ENCODE measurements at regions of chr6 and their contacts with region 1.

Region 1: GRCh38 chr6:7910654-7911344 is at the start of gene TXNDC5:
- DNase-seq: peak; percentile 32 to 82 (median 66)
- ATAC-seq: peak; percentile 85
- H3K4me3 ChIP-seq: peak within 1 kb of the TSS; percentile 77
- H3K4me3 Mint-ChIP-seq: peak within 1 kb of the TSS; percentile 84
- H3K27ac ChIP-seq: no peak within 1 kb of the TSS
- H3K27ac Mint-ChIP-seq: no peak within 1 kb of the TSS
- H3K4me1 ChIP-seq: peaks cover 16% of the 10 kb centered on the region
- H3K4me1 Mint-ChIP-seq: no peaks in the 10 kb centered on the region
- H3K27me3 ChIP-seq: peaks cover 0 to 2% of the 10 kb centered on the region in 2 experiments
- H3K27me3 Mint-ChIP-seq: no peaks in the 10 kb centered on the region
- CTCF ChIP-seq: no peak
- total RNA-seq, gene TXNDC5: 4.2 to 7.8 TPM

Region 2: DNA sequence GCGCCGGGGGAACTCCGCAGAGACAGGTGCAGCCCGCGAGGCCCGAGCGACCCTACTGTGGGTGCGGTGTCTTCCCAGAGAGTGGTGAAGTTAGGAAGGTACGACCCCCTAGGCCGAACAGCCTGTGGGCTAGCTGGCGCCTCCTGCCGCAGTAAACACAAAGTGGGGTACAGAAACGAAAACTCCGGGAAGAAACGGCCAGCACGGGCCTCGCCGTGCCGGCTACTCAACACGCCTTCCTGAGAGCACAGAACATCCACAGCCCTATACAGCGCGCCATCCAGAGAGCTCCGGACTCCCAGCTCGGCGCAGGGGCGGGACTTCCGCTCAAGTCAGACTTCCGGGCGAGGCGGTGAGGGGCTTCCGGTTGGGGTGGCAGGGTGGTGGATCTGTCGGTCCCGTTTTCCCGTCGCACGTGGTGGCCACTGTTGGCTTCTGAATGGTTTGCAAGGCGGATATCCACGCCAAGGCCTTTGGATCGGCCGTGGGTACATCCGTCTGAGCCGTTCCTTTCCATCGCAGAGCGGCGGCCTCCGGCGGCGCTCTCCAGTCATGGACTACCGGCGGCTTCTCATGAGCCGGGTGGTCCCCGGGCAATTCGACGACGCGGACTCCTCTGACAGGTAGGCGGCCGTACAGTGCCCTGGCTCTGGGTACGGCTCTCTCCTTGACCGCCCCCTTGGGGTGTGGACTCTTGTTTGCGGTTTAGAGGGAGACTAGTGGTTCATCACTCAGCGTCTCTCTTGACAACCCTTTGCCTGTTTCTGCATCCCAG is 521.2 kb before region 1 on chr6 and contains the starts of genes CAGE1 and RIOK1:
- CTCF ChIA-PET with region 1: no interaction called
- POLR2A ChIA-PET with region 1: no interaction called
- intact Hi-C with region 1: loop called in 1 of 2 experiments (anchors 10 kb)
- DNase-seq: peak; percentile 89 to 97 (median 92)
- ATAC-seq: peak; percentile 88
- H3K4me3 ChIP-seq: peak within 1 kb of the TSS; percentile 80
- H3K4me3 Mint-ChIP-seq: peak within 1 kb of the TSS; percentile 93
- H3K27ac ChIP-seq: peak within 1 kb of the TSS; percentile 98 to 99
- H3K27ac Mint-ChIP-seq: peak within 1 kb of the TSS; percentile 98
- H3K4me1 ChIP-seq: peaks cover 28% of the 10 kb centered on the region
- H3K4me1 Mint-ChIP-seq: peaks cover 43% of the 10 kb centered on the region
- H3K27me3 ChIP-seq: no peaks in the 10 kb centered on the region
- H3K27me3 Mint-ChIP-seq: no peaks in the 10 kb centered on the region
- CTCF ChIP-seq: no peak
- total RNA-seq, gene CAGE1: 0.38 to 0.39 TPM
- total RNA-seq, gene RIOK1: 25.5 to 28.1 TPM

Region 3: GRCh38 chr6:7589949-7590917 is 320.6 kb before region 1 on chr6 and contains the start of gene SNRNP48:
- CTCF ChIA-PET with region 1: no interaction called
- POLR2A ChIA-PET with region 1: no interaction called
- intact Hi-C with region 1: loop called in 1 of 2 experiments (anchors 10 kb)
- DNase-seq: peak; percentile 79 to 94 (median 88)
- ATAC-seq: peak; percentile 98
- H3K4me3 ChIP-seq: peak within 1 kb of the TSS; percentile 96
- H3K4me3 Mint-ChIP-seq: peak within 1 kb of the TSS; percentile 100
- H3K27ac ChIP-seq: peak within 1 kb of the TSS; percentile 38 to 45
- H3K27ac Mint-ChIP-seq: peak within 1 kb of the TSS; percentile 91
- H3K4me1 ChIP-seq: peaks cover 15% of the 10 kb centered on the region
- H3K4me1 Mint-ChIP-seq: peaks cover 48% of the 10 kb centered on the region
- H3K27me3 ChIP-seq: no peaks in the 10 kb centered on the region
- H3K27me3 Mint-ChIP-seq: no peaks in the 10 kb centered on the region
- CTCF ChIP-seq: no peak
- total RNA-seq, gene SNRNP48: 12.1 to 13.4 TPM

Region 4: DNA sequence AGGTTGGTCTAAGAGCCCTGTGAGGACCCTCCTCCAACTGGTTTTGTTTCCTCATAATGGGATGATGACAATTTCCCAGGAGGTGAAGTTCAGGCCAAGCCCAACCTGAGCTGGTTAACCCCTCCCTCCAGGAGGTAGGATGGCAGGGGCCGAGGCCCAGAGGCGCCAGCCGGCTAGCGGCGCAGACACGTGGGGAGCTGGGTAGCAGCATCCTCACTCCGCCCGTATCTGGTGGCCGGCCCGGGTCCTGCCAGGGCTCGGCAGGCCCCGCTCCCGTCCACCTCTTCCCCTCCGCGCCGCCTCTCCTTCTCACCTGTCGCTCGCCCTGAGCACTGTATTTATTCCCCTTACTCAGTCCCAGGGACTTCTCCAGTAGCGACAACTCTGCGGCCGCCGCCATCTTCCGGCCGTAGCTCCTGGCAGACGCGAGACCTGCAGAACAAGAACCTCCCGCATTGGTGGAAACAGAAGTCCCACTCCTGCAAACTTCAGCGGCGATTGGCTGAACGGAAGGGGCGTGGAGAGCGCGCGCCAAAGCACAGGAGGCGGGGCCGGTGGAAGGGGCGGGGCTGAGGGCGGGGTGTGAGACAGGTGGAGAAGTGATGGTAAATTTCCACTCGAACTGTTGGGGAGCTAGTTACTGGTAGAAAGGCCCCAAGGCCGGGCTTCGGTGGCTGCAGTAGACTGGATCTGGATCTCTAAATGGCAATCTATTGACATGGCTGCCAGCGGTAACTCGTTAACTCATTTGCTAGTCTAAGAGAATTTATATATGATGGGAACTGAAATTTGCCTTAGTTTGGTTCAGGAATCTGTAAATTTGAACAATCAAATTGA is 191.5 kb after region 1 on chr6 and contains the start of gene EEF1E1:
- CTCF ChIA-PET with region 1: no interaction called
- POLR2A ChIA-PET with region 1: interaction called, 3 read pairs
- intact Hi-C with region 1: loop called in 1 of 2 experiments (anchors 2 kb)
- DNase-seq: peak; percentile 93 to 99 (median 97)
- ATAC-seq: peak; percentile 97
- H3K4me3 ChIP-seq: peak within 1 kb of the TSS; percentile 89
- H3K4me3 Mint-ChIP-seq: peak within 1 kb of the TSS; percentile 96
- H3K27ac ChIP-seq: peak within 1 kb of the TSS; percentile 69 to 73
- H3K27ac Mint-ChIP-seq: peak within 1 kb of the TSS; percentile 81
- H3K4me1 ChIP-seq: peaks cover 20% of the 10 kb centered on the region
- H3K4me1 Mint-ChIP-seq: peaks cover 31% of the 10 kb centered on the region
- H3K27me3 ChIP-seq: no peaks in the 10 kb centered on the region
- H3K27me3 Mint-ChIP-seq: peaks cover 25% of the 10 kb centered on the region
- CTCF ChIP-seq: no peak
- total RNA-seq, gene EEF1E1: 11.2 to 14.7 TPM

Region 5: DNA sequence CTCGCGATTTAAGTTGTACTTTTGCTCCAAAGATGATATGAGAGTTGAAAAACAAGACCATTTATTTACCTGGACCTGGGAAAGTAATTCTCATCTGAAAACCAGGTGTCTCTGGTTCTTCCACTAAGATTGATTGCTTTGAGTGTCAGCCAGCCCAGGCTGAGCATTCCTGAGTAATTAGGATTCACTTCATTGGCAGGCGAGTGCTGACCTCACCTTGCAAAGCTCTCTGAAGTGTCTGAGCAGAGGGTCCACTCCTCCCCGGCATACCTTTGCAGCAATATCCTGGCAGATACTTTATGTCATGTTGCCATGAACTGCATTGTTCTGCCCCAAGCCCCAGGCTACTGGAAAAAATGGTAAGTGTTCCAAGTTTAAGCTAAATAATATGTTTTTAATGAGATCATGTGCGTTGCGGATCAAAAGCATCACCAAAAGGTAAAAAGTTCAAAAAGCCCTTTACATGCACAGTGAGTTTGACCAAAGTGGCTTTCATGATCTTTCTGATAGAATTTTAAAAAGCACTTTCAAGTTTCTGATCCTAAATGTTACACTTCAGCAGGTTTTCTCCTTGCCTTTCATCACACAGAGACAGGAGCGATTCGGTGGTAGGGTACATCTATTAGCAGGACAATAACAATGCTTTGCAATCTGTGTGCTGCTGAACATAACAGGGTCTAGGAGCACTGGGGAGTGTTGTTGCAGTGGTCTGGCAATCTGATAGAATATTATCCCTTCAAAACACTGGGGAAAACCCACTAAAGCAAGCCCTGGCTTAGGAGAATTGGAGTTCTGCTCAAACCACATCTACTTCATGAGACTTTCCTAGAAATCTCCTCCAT is 319.3 kb after region 1 on chr6:
- CTCF ChIA-PET with region 1: no interaction called
- POLR2A ChIA-PET with region 1: no interaction called
- intact Hi-C with region 1: no loop called
- DNase-seq: no peak
- ATAC-seq: no peak
- H3K4me3 ChIP-seq: no peak overlapping the region
- H3K4me3 Mint-ChIP-seq: no peak overlapping the region
- H3K27ac ChIP-seq: no peak overlapping the region
- H3K27ac Mint-ChIP-seq: no peak overlapping the region
- H3K4me1 ChIP-seq: no peaks in the 10 kb centered on the region
- H3K4me1 Mint-ChIP-seq: no peaks in the 10 kb centered on the region
- H3K27me3 ChIP-seq: peaks cover 0 to 5% of the 10 kb centered on the region in 2 experiments
- H3K27me3 Mint-ChIP-seq: peaks cover 19% of the 10 kb centered on the region
- CTCF ChIP-seq: no peak

Region 6: GRCh38 chr6:9890469-9890868 is 1979.7 kb after region 1 on chr6:
- CTCF ChIA-PET with region 1: no interaction called
- POLR2A ChIA-PET with region 1: no interaction called
- intact Hi-C with region 1: no loop called
- DNase-seq: no peak
- ATAC-seq: no peak
- H3K4me3 ChIP-seq: no peak overlapping the region
- H3K4me3 Mint-ChIP-seq: no peak overlapping the region
- H3K27ac ChIP-seq: no peak overlapping the region
- H3K27ac Mint-ChIP-seq: no peak overlapping the region
- H3K4me1 ChIP-seq: no peaks in the 10 kb centered on the region
- H3K4me1 Mint-ChIP-seq: no peaks in the 10 kb centered on the region
- H3K27me3 ChIP-seq: no peaks in the 10 kb centered on the region
- H3K27me3 Mint-ChIP-seq: no peaks in the 10 kb centered on the region
- CTCF ChIP-seq: no peak